A549 (cell line): ENCODE measurements at regions of chr6 and their contacts with region 1.

Region 1: GRCh38 chr6:42547407-42548329 is 16.2 kb upstream of the UBR2 start:
- DNase-seq: peak; percentile 72 to 77
- ATAC-seq: peak; percentile 99
- H3K4me3 ChIP-seq: peak overlapping the region; percentile 52
- H3K27ac ChIP-seq: peak overlapping the region; percentile 81 to 84
- H3K4me1 ChIP-seq: peaks cover 16% of the 10 kb centered on the region; the same call in 2 of the 3 replicates
- CTCF ChIP-seq: peak; percentile 90
- EP300 ChIP-seq: no peak
- POLR2A ChIP-seq: no peak
- RAD21 ChIP-seq: peak; percentile 88 to 93

Region 2: DNA sequence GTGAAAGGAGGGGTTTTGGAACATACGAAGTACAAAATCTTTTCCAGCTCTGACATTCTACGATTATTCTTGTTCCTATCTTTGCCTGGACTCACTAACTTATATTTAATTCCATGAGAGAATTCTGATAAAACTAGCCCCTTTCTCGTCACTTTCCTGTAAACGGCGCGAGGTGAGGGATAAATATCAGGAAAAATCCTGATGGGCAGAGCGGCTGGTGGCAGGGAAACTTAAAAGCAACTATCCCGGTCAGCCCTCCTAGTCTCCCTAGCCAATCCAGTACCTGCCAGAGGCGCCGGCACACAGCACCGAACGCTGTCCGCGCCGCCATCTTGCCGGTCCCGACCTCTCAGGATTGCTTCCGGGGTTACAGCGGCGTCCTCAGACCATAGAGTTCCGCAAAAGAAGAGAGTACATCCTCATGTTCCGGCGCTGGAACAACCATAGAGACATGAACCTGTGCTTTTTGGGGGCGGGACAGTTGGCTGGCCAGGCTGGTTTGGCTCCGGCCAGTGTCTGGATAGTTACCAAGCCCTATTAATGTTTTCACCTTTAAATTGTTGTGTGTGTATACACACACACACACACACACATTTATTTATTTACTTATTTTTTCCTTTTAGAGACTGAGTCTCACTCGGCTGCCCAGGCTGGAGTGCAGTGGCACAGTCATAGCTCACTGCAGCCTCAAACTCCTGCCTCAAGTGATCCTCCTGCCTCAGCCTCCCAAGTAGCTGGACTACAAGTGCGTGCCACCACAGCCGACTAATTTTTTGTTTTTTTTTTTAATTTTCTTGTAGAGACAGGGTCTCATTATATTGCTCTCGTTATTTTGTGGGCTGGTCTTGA is 329.9 kb before region 1 on chr6 and contains the start of gene MRPS10:
- CTCF ChIA-PET with region 1: interaction called, 8 read pairs
- POLR2A ChIA-PET with region 1: interaction called, 10 read pairs
- DNase-seq: peak; percentile 85 to 95
- ATAC-seq: peak; percentile 99
- H3K4me3 ChIP-seq: peak within 1 kb of the TSS; percentile 88
- H3K27ac ChIP-seq: peak within 1 kb of the TSS; percentile 92 to 97
- H3K4me1 ChIP-seq: peaks cover 34% of the 10 kb centered on the region; the same call in 2 of the 3 replicates
- CTCF ChIP-seq: no peak
- EP300 ChIP-seq: no peak
- POLR2A ChIP-seq: peak; percentile 66
- RAD21 ChIP-seq: no peak
- polyA plus RNA-seq, gene MRPS10: 41.7 and 60.7 TPM in 2 replicates

Region 3: DNA sequence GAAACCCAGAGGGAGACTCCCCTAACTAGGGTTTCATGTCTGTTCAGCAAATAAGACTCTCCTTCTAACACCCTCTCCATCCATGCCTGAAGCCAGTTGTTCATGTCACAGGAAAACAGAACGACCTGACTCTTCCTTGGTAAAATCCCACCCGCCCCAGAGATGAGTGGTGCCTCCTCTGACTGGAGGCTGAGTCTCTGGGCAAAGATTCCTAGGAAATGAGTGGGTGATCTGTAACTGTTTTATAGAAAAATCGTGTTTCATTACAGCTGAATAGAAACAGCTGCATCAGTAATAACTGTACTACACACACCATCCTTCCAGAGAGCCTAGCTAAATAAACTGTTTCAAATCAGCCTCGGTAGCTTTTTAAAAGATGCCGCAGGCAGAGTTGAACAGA is 292.6 kb before region 1 on chr6:
- CTCF ChIA-PET with region 1: interaction called, 33 read pairs
- POLR2A ChIA-PET with region 1: no interaction called
- DNase-seq: no peak
- ATAC-seq: no peak
- H3K4me3 ChIP-seq: no peak overlapping the region
- H3K27ac ChIP-seq: no peak overlapping the region
- H3K4me1 ChIP-seq: peaks cover 11% of the 10 kb centered on the region; the same call in 2 of the 3 replicates
- CTCF ChIP-seq: no peak
- EP300 ChIP-seq: no peak
- POLR2A ChIP-seq: no peak
- RAD21 ChIP-seq: no peak

Region 4: GRCh38 chr6:42453031-42453653 is 94.5 kb before region 1 on chr6:
- CTCF ChIA-PET with region 1: interaction called, 13 read pairs
- POLR2A ChIA-PET with region 1: interaction called, 19 read pairs
- DNase-seq: peak; percentile 62 to 76
- ATAC-seq: peak; percentile 77 to 91
- H3K4me3 ChIP-seq: peak overlapping the region; percentile 78
- H3K27ac ChIP-seq: peak overlapping the region; percentile 99 to 100
- H3K4me1 ChIP-seq: peaks cover 23% of the 10 kb centered on the region
- CTCF ChIP-seq: no peak
- EP300 ChIP-seq: no peak
- POLR2A ChIP-seq: peak; percentile 59
- RAD21 ChIP-seq: no peak

Region 5: GRCh38 chr6:42511803-42512422 is 35.8 kb before region 1 on chr6:
- CTCF ChIA-PET with region 1: interaction called, 16 read pairs
- POLR2A ChIA-PET with region 1: no interaction called
- DNase-seq: no peak
- ATAC-seq: no peak
- H3K4me3 ChIP-seq: no peak overlapping the region
- H3K27ac ChIP-seq: no peak overlapping the region
- H3K4me1 ChIP-seq: peaks cover 9% of the 10 kb centered on the region; the same call in 2 of the 3 replicates
- CTCF ChIP-seq: no peak
- EP300 ChIP-seq: no peak
- POLR2A ChIP-seq: no peak
- RAD21 ChIP-seq: no peak

Region 6: GRCh38 chr6:42537536-42537935 is 10.1 kb before region 1 on chr6:
- CTCF ChIA-PET with region 1: interaction called, 39 read pairs
- POLR2A ChIA-PET with region 1: no interaction called
- DNase-seq: no peak
- ATAC-seq: no peak
- H3K4me3 ChIP-seq: no peak overlapping the region
- H3K27ac ChIP-seq: no peak overlapping the region
- H3K4me1 ChIP-seq: no peaks in the 10 kb centered on the region
- CTCF ChIP-seq: no peak
- EP300 ChIP-seq: no peak
- POLR2A ChIP-seq: no peak
- RAD21 ChIP-seq: no peak